Psoas muscle (tissue), 8 donors: ENCODE measurements at regions of chr18 and their contacts with region 1.

Region 1: DNA sequence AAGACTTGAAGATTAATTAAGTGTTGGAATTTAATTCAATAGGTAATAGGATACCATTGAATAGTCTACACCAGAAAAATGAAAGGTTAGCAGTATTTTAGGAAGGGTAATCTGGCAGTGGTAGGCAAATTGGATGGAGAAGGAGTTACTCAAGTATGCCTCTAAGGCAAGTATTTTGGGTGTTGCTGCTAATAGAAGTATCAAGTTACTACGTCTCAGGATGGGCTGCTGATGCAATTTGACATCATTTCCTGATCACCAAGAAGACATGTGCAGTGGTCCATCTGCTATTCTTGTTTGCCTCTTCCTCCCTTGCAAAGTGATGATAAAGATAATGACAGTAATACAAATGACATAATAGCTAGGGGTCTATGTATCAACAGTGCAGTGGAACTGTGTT is 485.3 kb downstream of the TGIF1 start:
- DNase-seq: no peak
- ATAC-seq: no peak
- H3K4me3 ChIP-seq: no peak overlapping the region
- H3K27ac ChIP-seq: no peak overlapping the region
- H3K4me1 ChIP-seq: no peaks in the 10 kb centered on the region
- H3K27me3 ChIP-seq: no peaks in the 10 kb centered on the region
- CTCF ChIP-seq: no peak

Region 2: GRCh38 chr18:3889803-3890202 is 45.5 kb before region 1 on chr18:
- intact Hi-C with region 1: loop called in 1 of 2 experiments (anchors 1 kb)
- DNase-seq: peak in 1 of 2 donors; percentile 29
- ATAC-seq: no peak
- H3K4me3 ChIP-seq: no peak overlapping the region
- H3K27ac ChIP-seq: no peak overlapping the region
- H3K4me1 ChIP-seq: no peaks in the 10 kb centered on the region
- H3K27me3 ChIP-seq: no peaks in the 10 kb centered on the region
- CTCF ChIP-seq: no peak